K562 (cell line): ENCODE measurements at regions of chr18 and their contacts with region 1.

Region 1: GRCh38 chr18:54950221-54950620 is 9.0 kb downstream of the CCDC68 start:
- DNase-seq: no peak
- ATAC-seq: peak; percentile 49; the same call in 1 of the 3 replicates
- H3K4me3 ChIP-seq: no peak overlapping the region
- H3K27ac ChIP-seq: no peak overlapping the region
- H3K4me1 ChIP-seq: peaks cover 0 to 11% of the 10 kb centered on the region in 2 experiments; a peak in 2 of 5 replicates
- H3K27me3 ChIP-seq: no peaks in the 10 kb centered on the region
- CTCF ChIP-seq: peak in 2 of 3 experiments; percentile 23 to 28; a peak in 2 of 6 replicates
- EP300 ChIP-seq: no peak
- POLR2A ChIP-seq: no peak
- RAD21 ChIP-seq: peak in 1 of 2 experiments; percentile 76; a peak in 2 of 4 replicates

Region 2: DNA sequence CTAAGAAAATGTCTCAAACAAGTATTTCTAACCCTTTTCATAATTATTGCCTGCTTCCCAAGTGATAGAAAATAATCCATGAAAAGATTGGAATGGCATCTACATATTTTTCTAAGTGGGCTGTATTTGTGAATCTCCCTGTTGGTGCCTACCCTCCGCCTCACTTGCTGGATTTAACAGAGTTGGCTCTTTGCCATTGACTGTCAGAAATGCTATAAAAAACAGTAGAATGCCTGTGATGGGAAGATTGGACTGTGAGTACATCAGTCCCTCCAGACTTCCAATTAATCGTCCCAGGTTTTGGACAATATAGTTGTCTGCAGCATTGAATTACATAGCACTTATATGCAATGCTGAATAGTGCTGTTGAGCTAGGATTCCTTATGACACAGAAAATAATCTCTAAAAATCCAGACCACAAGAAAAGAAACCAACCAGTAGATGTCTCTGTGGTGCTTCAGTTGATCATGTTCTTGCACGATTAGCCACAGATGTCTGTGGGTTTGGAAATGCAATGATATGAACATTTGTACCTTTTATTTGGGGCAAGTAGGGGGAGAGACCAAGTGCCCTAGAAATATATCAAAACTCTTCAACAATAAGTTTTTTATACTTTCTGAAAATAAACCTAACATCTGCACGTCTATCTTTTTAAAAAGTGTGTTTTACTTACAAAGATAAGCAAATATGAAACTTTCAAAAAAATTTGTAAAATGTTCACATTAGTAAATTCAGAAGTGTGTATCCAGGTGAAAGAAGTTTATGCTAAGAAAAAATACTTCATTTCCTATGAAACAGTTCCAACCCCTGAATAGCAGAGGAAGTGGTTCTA is 270.7 kb before region 1 on chr18:
- CTCF ChIA-PET with region 1: interaction called, 3 read pairs
- POLR2A ChIA-PET with region 1: no interaction called
- in situ Hi-C with region 1: no loop called
- intact Hi-C with region 1: loop called (anchors 1 kb)
- DNase-seq: peak in 3 of 4 experiments; percentile 7 to 61 (median 30)
- ATAC-seq: peak; percentile 71; the same call in 2 of the 3 replicates
- H3K4me3 ChIP-seq: no peak overlapping the region
- H3K27ac ChIP-seq: no peak overlapping the region
- H3K4me1 ChIP-seq: no peaks in the 10 kb centered on the region
- H3K27me3 ChIP-seq: no peaks in the 10 kb centered on the region
- CTCF ChIP-seq: peak; percentile 37 to 63 (median 48); a peak in 4 of 6 replicates
- EP300 ChIP-seq: no peak
- POLR2A ChIP-seq: no peak
- RAD21 ChIP-seq: peak; percentile 88 to 91